ENCODE measurements at regions of chr2 and their contacts with region 1.

Region 1: GRCh38 chr2:185738679-185739472 is at the start of gene FSIP2:
- DNase-seq: peak; percentile 98
- H3K4me3 Mint-ChIP-seq: peak within 1 kb of the TSS; percentile 81
- H3K27ac Mint-ChIP-seq: peak within 1 kb of the TSS; percentile 53
- H3K4me1 Mint-ChIP-seq: peaks cover 18% of the 10 kb centered on the region
- H3K27me3 Mint-ChIP-seq: no peaks in the 10 kb centered on the region
- CTCF ChIP-seq: peak; percentile 99
- total RNA-seq, gene FSIP2: 0.27 and 0.35 TPM in 2 replicates

Region 2: GRCh38 chr2:185208261-185208660 is 530.6 kb before region 1 on chr2:
- CTCF ChIA-PET with region 1: interaction called, 10 read pairs
- intact Hi-C with region 1: loop called (anchors 2 kb)
- DNase-seq: peak; percentile 73
- H3K4me3 Mint-ChIP-seq: no peak overlapping the region
- H3K27ac Mint-ChIP-seq: no peak overlapping the region
- H3K4me1 Mint-ChIP-seq: peaks cover 9% of the 10 kb centered on the region
- H3K27me3 Mint-ChIP-seq: no peaks in the 10 kb centered on the region
- CTCF ChIP-seq: peak; percentile 60

Region 3: DNA sequence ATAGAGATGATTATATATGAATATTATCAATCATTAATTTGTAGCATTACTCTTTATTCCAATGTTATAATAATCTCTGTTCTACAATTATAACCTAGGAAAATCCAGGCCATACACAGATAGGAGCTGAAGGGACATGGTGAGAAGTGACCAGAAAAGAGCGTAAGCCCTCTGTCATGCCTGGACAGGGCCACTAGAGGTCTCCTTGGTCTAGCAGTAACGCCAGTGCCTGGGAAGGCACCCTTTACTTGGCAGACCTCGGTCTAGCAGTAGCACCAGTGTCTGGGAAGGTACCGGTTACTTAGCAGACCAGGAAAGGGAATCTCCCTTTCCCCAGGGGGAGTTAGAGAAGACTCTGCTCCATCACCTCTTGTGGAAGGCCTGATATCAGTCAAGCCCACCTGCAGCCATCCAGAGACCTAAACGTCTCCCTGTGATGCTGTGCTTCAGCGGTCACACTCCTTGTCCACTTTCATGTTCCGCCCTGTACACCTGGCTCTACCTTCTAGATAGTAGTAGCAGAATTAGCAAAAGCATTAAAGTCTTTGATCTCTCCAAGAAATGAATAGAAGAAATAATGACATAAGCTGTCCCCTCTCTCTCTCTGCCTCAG is 447.7 kb before region 1 on chr2:
- CTCF ChIA-PET with region 1: interaction called, 27 read pairs
- intact Hi-C with region 1: loop called (anchors 2 kb)
- DNase-seq: peak; percentile 67
- H3K4me3 Mint-ChIP-seq: no peak overlapping the region
- H3K27ac Mint-ChIP-seq: no peak overlapping the region
- H3K4me1 Mint-ChIP-seq: no peaks in the 10 kb centered on the region
- H3K27me3 Mint-ChIP-seq: no peaks in the 10 kb centered on the region
- CTCF ChIP-seq: peak; percentile 78

Region 4: GRCh38 chr2:185484601-185485000 is 254.3 kb before region 1 on chr2:
- CTCF ChIA-PET with region 1: no interaction called
- intact Hi-C with region 1: no loop called
- DNase-seq: no peak
- H3K4me3 Mint-ChIP-seq: no peak overlapping the region
- H3K27ac Mint-ChIP-seq: no peak overlapping the region
- H3K4me1 Mint-ChIP-seq: no peaks in the 10 kb centered on the region
- H3K27me3 Mint-ChIP-seq: no peaks in the 10 kb centered on the region
- CTCF ChIP-seq: no peak

Region 5: DNA sequence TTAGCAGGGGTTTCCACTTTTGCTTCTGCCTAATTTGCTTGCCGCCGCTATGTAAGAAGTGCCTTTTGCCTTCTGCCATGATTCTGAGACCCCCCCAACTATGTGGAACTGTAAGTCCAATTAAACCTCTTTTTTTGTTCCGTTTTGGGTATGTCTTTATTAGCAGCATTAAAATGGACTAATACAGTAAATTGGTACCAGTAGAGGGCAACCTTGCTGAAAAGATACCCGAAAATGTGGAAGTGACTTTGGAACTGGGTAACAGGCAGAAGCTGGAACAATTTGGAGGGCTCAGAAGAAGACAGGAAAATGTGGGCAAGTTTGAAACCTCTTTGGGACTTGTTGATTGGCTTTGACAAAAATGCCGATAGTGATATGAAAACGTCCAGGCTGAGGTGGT is 216.4 kb before region 1 on chr2:
- CTCF ChIA-PET with region 1: interaction called, 6 read pairs
- intact Hi-C with region 1: loop called (anchors 2 kb)
- DNase-seq: no peak
- H3K4me3 Mint-ChIP-seq: no peak overlapping the region
- H3K27ac Mint-ChIP-seq: no peak overlapping the region
- H3K4me1 Mint-ChIP-seq: no peaks in the 10 kb centered on the region
- H3K27me3 Mint-ChIP-seq: no peaks in the 10 kb centered on the region
- CTCF ChIP-seq: no peak

Region 6: DNA sequence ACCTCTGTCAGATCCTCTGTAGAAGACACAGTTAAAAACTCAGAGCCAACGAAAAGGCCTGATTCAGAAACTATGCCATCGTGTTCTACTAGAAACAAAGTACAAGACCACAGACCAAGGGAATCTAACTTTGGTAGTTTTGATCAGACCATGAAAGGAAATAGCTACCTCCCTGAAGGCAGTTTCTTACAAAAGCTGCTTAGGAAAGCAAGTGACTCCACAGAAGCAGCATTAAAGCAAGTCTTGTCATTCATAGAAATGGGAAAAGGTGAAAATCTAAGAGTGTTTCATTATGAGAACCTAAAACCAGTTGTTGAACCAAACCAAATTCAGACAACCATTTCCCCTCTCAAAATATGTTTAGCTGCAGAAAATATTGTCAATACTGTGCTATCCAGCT is 57.9 kb after region 1 on chr2:
- CTCF ChIA-PET with region 1: no interaction called
- intact Hi-C with region 1: no loop called
- DNase-seq: no peak
- H3K4me3 Mint-ChIP-seq: no peak overlapping the region
- H3K27ac Mint-ChIP-seq: no peak overlapping the region
- H3K4me1 Mint-ChIP-seq: no peaks in the 10 kb centered on the region
- H3K27me3 Mint-ChIP-seq: no peaks in the 10 kb centered on the region
- CTCF ChIP-seq: no peak